Heart right ventricle (tissue), 16 donors: ENCODE measurements at regions of chr2 and their contacts with region 1.

Region 1: DNA sequence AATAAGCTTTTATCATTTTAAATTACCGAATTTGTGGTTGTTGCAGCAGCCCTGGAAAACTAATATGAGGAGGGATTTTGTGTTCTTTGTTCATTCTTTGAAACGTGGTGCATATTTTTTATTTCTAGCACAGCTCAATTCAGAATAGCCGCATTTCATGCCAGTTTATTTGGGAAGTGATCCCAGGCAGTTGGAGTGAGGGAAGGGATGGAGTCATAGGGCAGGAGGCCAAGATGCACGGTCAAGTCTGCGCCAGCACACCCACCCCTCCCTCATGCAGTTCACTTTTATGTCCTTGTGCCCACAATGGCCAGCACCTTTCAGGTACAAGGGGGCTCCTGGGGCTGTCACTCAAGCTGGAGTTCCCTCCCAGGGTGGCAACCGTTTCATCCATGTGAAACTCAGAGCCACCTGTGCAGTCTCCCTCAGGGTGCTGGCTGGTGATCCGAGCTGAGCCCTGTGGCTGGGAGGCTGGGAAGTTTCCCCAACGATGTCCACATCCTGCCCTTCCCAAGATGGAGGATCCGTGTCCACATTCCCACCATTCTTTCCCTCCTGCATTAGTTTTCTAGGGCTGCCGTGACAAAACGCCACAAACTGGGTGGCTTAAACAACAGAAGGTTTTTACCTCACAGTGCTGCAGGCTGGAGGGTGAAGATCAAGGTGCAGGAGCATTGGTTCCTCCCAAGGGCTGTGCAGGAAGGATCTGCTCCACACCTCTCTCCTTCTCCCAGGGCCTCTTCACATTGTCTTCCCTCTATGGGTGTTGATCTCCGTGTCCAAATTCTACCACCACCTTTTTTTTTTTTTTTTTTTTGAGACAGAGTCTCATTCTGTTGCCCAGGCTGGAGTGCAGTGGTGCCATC is 68.5 kb upstream of the ITGA6 start:
- DNase-seq: no peak
- ATAC-seq: peak in 5 of 8 donors; percentile 18 to 55 (median 44)
- H3K4me3 ChIP-seq: no peak overlapping the region
- H3K27ac ChIP-seq: peak overlapping the region in 7 of 10 donors; percentile 56 to 80 (median 74)
- H3K4me1 ChIP-seq: peaks cover 0 to 42% (median 26%) of the 10 kb centered on the region in 9 donors
- H3K27me3 ChIP-seq: no peaks in the 10 kb centered on the region
- CTCF ChIP-seq: no peak

Region 2: GRCh38 chr2:171447675-171448074 is 911.2 kb before region 1 on chr2:
- intact Hi-C with region 1: loop called in 1 of 10 experiments (anchors 10 kb)
- DNase-seq: no peak
- ATAC-seq: no peak
- H3K4me3 ChIP-seq: no peak overlapping the region
- H3K27ac ChIP-seq: no peak overlapping the region
- H3K4me1 ChIP-seq: no peaks in the 10 kb centered on the region
- H3K27me3 ChIP-seq: no peaks in the 10 kb centered on the region
- CTCF ChIP-seq: no peak

Region 3: GRCh38 chr2:172253190-172254052 is 105.5 kb before region 1 on chr2:
- intact Hi-C with region 1: loop called in 1 of 10 experiments (anchors 5 kb)
- DNase-seq: peak in 1 of 2 donors; percentile 63
- ATAC-seq: peak; percentile 67 to 90 (median 84)
- H3K4me3 ChIP-seq: no peak overlapping the region
- H3K27ac ChIP-seq: peak overlapping the region; percentile 34 to 82 (median 76)
- H3K4me1 ChIP-seq: peaks cover 0 to 44% (median 21%) of the 10 kb centered on the region in 9 donors
- H3K27me3 ChIP-seq: no peaks in the 10 kb centered on the region
- CTCF ChIP-seq: no peak

Region 4: GRCh38 chr2:172404824-172405223 is 45.9 kb after region 1 on chr2:
- intact Hi-C with region 1: loop called in 1 of 10 experiments (anchors 5 kb)
- DNase-seq: no peak
- ATAC-seq: peak in 6 of 8 donors; percentile 14 to 53 (median 29)
- H3K4me3 ChIP-seq: no peak overlapping the region
- H3K27ac ChIP-seq: peak overlapping the region in 7 of 10 donors; percentile 37 to 64 (median 53)
- H3K4me1 ChIP-seq: peaks cover 0 to 52% (median 15%) of the 10 kb centered on the region in 9 donors
- H3K27me3 ChIP-seq: no peaks in the 10 kb centered on the region
- CTCF ChIP-seq: no peak